Left lung (tissue), 14 donors: ENCODE measurements at regions of chr17 and their contacts with region 1.

Region 1: GRCh38 chr17:29931231-29931932 is 1.4 kb upstream of the SSH2 start:
- DNase-seq: peak in 3 of 4 donors; percentile 64 to 87 (median 73)
- ATAC-seq: peak; percentile 68
- H3K4me3 ChIP-seq: peak overlapping the region; percentile 53 to 81
- H3K27ac ChIP-seq: peak overlapping the region; percentile 33 to 92
- H3K4me1 ChIP-seq: peaks cover 10 to 40% of the 10 kb centered on the region in 2 donors
- H3K27me3 ChIP-seq: no peaks in the 10 kb centered on the region
- CTCF ChIP-seq: peak; percentile 69 to 88

Region 2: GRCh38 chr17:29633886-29634285 is 297.5 kb before region 1 on chr17:
- intact Hi-C with region 1: loop called in 1 of 2 experiments (anchors 10 kb)
- DNase-seq: no peak
- ATAC-seq: no peak
- H3K4me3 ChIP-seq: no peak overlapping the region
- H3K27ac ChIP-seq: no peak overlapping the region
- H3K4me1 ChIP-seq: peaks cover 0 to 1% of the 10 kb centered on the region in 2 donors
- H3K27me3 ChIP-seq: no peaks in the 10 kb centered on the region
- CTCF ChIP-seq: no peak

Region 3: DNA sequence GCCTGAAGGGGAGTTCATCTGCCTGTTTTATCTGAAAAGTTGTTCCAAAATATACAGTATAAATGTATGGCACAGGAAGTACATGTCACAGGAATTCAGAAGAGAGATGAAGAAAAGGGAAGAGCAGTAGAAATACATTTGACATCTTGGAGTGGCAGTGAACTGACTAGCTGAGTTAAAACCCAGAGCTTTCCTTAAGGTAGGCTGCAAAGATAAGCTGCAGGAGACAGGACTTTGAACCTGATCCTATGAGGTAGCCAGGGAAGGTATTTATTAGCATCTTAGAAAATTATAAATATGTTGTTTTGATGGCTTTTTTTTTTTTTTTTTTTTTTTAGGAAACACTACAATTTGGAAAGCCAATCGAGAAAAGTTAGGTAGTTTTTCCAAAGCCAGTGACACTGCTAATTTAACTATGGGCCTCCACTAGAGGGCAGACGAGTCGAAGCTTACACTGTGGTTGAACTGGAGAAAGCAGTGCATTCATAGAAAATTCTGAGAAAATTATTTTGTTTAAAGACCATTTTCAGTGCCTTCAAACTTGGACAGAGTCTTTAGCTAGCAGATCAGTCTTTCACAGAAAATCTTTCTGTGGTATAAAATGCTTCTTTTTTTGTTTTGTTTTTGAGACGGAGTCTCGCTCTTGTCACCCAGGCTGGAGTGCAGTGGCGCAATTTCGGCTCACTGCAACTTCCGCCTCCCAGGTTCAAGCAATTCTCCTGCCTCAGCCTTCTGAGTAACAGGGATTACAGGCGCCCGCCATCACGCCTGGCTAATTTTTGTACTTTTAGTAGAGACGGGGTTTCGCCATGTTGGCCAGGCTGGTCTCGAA is 123.6 kb before region 1 on chr17:
- intact Hi-C with region 1: loop called in 1 of 2 experiments (anchors 2 kb)
- DNase-seq: peak; percentile 54 to 87 (median 70)
- ATAC-seq: peak; percentile 97
- H3K4me3 ChIP-seq: peak overlapping the region; percentile 8 to 29
- H3K27ac ChIP-seq: peak overlapping the region; percentile 31 to 84
- H3K4me1 ChIP-seq: peaks cover 0 to 4% of the 10 kb centered on the region in 2 donors
- H3K27me3 ChIP-seq: no peaks in the 10 kb centered on the region
- CTCF ChIP-seq: peak; percentile 62 to 77